ENCODE measurements at regions of chr2 and their contacts with region 1.

Region 1: GRCh38 chr2:209016207-209016606 is 407.6 kb upstream of the MAP2 start:
- DNase-seq: no peak
- H3K4me3 ChIP-seq: no peak overlapping the region
- H3K27ac ChIP-seq: no peak overlapping the region
- H3K4me1 ChIP-seq: no peaks in the 10 kb centered on the region
- H3K27me3 ChIP-seq: no peaks in the 10 kb centered on the region
- CTCF ChIP-seq: no peak
- POLR2A ChIP-seq: no peak

Region 2: DNA sequence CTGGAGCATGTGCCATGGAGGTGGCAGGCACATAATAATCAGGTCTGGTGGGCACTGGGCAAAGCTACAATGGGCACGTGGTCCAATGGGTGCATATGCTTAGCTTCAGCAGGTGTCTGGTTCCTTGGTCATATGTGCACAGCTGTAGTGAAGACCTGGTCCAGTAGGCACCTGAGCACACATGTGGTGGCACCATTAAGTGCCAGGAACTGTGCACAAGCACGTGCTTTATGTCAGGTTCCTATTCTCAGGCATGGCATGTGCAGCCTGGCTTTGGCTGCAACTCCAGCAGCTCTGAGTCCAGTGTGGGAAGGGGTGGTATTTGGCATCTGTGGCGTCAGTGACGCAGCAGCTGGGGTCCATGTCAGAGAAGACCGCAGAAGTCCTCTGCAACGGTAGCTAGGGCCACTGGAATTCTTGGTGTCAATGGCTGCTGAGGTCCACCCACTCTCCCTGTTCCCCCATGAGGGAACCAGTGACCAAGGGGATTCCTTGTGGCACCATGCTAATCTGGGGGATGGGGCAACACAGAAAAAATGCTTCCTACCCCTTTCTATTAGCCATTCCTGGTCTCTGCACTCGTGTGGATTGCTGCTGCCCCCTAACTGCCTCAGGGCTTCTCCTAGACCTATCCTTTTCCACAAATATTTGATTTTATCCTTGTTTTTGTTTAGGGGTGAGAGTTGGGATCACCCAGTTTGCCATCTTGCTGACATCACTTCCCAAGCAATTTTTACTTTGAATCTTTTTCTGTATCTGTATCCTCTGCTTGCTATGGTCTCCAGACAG is 144.8 kb after region 1 on chr2:
- intact Hi-C with region 1: no loop called
- DNase-seq: no peak
- H3K4me3 ChIP-seq: no peak overlapping the region
- H3K27ac ChIP-seq: no peak overlapping the region
- H3K4me1 ChIP-seq: no peaks in the 10 kb centered on the region
- H3K27me3 ChIP-seq: no peaks in the 10 kb centered on the region
- CTCF ChIP-seq: no peak
- POLR2A ChIP-seq: no peak

Region 3: GRCh38 chr2:209965723-209966122 is 949.5 kb after region 1 on chr2:
- intact Hi-C with region 1: loop called (anchors 5 kb)
- DNase-seq: no peak
- H3K4me3 ChIP-seq: no peak overlapping the region
- H3K27ac ChIP-seq: no peak overlapping the region
- H3K4me1 ChIP-seq: no peaks in the 10 kb centered on the region
- H3K27me3 ChIP-seq: no peaks in the 10 kb centered on the region
- CTCF ChIP-seq: no peak
- POLR2A ChIP-seq: no peak